Activated T-helper 1 cell treated with anti-CD3 and anti-CD28 coated beads, Interleukin-12 subunit alpha, Interleukin-12 subunit beta, Interleukin-2, Interleukin-4 antibody, amounts not matched to agents 30 ng/mL and 10 ng/mL and 1 ng/mL, durations not matched to agents 14 hours and 24 hours and 36 hours (primary cell): ENCODE measurements at regions of chr7 and their contacts with region 1.

Region 1: GRCh38 chr7:76291343-76292212 is 10.9 kb upstream of the HSPB1 start:
- DNase-seq: peak; percentile 84
- H3K4me3 Mint-ChIP-seq: peak overlapping the region; percentile 43
- H3K27ac Mint-ChIP-seq: peak overlapping the region; percentile 64
- H3K4me1 Mint-ChIP-seq: peaks cover 13% of the 10 kb centered on the region
- H3K27me3 Mint-ChIP-seq: peaks cover 11% of the 10 kb centered on the region

Region 2: DNA sequence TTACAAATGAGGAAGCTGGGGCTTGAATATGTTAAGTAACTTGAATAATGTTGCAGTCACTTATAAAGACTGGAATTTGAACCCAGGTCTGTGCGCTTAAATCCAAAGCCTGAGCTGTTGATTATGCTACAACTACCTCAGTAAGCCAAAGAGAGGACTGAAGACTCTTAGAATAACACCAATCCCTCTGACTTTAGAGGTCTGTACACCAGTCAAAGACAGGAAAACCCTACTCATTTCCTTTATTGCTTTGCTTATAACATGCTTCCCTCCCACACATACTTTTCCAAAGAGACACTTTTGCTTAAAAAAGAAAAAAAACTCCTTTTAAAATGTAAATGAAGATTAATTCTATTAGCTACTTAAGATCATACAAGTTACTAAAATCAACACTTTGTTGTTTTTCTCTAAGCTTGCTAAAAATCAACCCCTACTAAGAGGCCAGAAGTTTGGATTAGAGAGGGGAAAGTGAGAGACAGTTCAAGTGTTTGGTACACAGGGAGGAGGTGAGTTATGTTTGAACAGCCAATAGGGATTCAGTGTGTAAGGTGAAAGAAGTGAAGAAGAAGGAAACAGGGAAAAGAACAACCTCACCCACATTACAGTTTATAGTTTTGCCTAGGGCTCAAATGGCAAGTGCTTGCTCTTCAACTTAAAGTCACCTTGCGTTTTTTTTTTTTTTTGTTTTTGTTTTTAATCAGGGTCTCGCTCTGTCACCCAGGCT is 168.9 kb before region 1 on chr7:
- intact Hi-C with region 1: no loop called
- DNase-seq: no peak
- H3K4me3 Mint-ChIP-seq: no peak overlapping the region
- H3K27ac Mint-ChIP-seq: no peak overlapping the region
- H3K4me1 Mint-ChIP-seq: peaks cover 10% of the 10 kb centered on the region
- H3K27me3 Mint-ChIP-seq: no peaks in the 10 kb centered on the region

Region 3: DNA sequence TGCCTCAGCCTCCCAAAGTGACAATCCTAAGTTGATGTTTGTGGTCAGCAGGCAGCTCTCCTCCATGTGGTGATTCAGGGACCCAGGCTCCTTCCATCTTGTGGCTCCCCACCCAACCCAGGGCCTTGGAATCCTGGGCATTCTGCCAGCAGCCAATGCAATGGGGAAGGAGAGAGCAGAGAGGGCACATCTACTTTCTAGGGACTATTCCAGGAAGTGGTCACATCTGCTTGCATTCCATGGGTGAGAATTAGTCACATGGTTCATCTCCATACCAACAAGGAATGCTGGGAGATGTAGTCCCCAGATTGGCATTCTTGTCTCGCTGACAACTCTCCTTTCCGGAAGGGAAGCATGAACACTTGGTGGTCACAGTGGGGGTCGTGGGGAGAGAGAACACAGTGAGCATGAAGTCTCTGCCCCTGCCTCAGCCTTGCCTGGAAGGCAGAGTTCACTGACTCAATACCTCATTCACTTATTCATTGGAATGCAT is 99.7 kb before region 1 on chr7:
- intact Hi-C with region 1: no loop called
- DNase-seq: no peak
- H3K4me3 Mint-ChIP-seq: no peak overlapping the region
- H3K27ac Mint-ChIP-seq: no peak overlapping the region
- H3K4me1 Mint-ChIP-seq: no peaks in the 10 kb centered on the region
- H3K27me3 Mint-ChIP-seq: peaks cover 7% of the 10 kb centered on the region

Region 4: GRCh38 chr7:76262683-76263402 is 28.7 kb before region 1 on chr7:
- intact Hi-C with region 1: no loop called
- DNase-seq: no peak
- H3K4me3 Mint-ChIP-seq: no peak overlapping the region
- H3K27ac Mint-ChIP-seq: no peak overlapping the region
- H3K4me1 Mint-ChIP-seq: peaks cover 7% of the 10 kb centered on the region
- H3K27me3 Mint-ChIP-seq: peaks cover 30% of the 10 kb centered on the region

Region 5: DNA sequence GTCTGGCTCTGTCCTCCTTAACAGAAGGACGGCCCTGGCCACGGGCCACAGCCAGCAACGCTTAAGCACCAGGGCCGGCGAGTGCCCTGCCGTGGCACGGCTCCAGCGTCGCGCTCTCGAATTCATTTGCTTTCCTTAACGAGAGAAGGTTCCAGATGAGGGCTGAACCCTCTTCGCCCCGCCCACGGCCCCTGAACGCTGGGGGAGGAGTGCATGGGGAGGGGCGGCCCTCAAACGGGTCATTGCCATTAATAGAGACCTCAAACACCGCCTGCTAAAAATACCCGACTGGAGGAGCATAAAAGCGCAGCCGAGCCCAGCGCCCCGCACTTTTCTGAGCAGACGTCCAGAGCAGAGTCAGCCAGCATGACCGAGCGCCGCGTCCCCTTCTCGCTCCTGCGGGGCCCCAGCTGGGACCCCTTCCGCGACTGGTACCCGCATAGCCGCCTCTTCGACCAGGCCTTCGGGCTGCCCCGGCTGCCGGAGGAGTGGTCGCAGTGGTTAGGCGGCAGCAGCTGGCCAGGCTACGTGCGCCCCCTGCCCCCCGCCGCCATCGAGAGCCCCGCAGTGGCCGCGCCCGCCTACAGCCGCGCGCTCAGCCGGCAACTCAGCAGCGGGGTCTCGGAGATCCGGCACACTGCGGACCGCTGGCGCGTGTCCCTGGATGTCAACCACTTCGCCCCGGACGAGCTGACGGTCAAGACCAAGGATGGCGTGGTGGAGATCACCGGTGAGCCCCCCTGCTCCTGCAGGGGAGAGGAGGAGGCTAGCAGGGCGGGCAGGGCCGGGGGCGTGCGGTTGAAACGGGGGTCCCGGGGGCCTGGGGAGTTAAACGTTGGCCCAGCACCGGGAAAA is 11.0 kb after region 1 on chr7 and contains the start of gene HSPB1:
- intact Hi-C with region 1: loop called (anchors 1 kb)
- DNase-seq: peak; percentile 34
- H3K4me3 Mint-ChIP-seq: peak within 1 kb of the TSS; percentile 89
- H3K27ac Mint-ChIP-seq: peak within 1 kb of the TSS; percentile 90
- H3K4me1 Mint-ChIP-seq: peaks cover 17% of the 10 kb centered on the region
- H3K27me3 Mint-ChIP-seq: peaks cover 19% of the 10 kb centered on the region
- total RNA-seq, gene HSPB1: 78.4 and 87.2 TPM in 2 replicates

Region 6: DNA sequence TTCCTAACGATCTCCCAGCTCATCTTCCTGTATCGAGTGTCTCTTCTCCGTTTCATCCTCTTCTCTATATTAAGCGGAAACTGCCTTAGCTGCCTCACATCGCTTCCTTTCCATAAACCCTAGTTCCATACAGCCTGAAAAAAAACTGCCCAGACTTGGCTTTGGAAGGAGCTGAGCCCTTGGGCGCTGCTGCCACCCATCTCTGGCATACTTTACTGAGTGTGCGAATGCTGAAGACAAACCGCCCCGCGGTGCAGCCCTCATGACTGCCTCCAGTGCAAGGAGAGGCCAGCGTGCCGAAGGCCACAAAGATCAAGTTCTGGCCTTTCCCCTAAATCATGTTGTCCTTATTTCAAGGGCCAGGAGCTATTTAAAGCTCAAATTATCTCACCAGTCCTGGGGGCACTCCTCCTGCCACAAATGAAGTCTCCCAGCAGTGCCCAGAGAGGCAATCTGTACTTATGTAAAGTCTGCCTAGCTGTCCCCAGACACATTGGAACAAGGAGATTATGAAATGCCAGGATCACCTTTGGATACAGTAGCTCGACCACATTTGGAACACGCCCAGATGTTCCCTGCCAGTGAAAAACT is 42.0 kb after region 1 on chr7:
- intact Hi-C with region 1: no loop called
- DNase-seq: no peak
- H3K4me3 Mint-ChIP-seq: no peak overlapping the region
- H3K27ac Mint-ChIP-seq: peak overlapping the region; percentile 2
- H3K4me1 Mint-ChIP-seq: peaks cover 36% of the 10 kb centered on the region
- H3K27me3 Mint-ChIP-seq: no peaks in the 10 kb centered on the region